ENCODE measurements at regions of chr6 and their contacts with region 1.

Region 1: GRCh38 chr6:73515204-73515655 is 5.6 kb downstream of the EEF1A1 start:
- DNase-seq: peak; percentile 41
- ATAC-seq: peak; percentile 17
- H3K4me3 Mint-ChIP-seq: peak overlapping the region; percentile 97
- H3K27ac Mint-ChIP-seq: peak overlapping the region; percentile 85
- H3K4me1 Mint-ChIP-seq: peaks cover 28% of the 10 kb centered on the region
- H3K27me3 Mint-ChIP-seq: no peaks in the 10 kb centered on the region
- CTCF ChIP-seq: no peak

Region 2: DNA sequence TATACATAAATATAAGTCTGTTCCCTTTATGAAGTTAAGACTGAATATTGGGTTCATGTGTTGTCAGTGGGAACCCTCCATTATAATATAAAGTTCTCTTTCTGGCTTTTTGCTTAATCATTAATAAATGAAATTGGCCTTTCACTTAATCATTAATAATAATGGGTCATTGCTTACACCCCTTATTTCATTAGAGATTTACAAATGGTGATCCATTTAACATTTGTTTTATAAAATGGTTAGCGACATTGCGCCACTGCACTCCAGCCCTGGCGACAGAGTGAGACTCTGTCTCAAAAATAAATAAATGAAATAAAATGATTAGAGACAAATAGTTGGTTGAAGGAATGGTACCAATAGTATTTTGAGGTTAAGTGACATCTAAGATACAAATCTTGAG is 102.1 kb before region 1 on chr6:
- CTCF ChIA-PET with region 1: no interaction called
- POLR2A ChIA-PET with region 1: no interaction called
- intact Hi-C with region 1: no loop called
- DNase-seq: no peak
- ATAC-seq: no peak
- H3K4me3 Mint-ChIP-seq: no peak overlapping the region
- H3K27ac Mint-ChIP-seq: no peak overlapping the region
- H3K4me1 Mint-ChIP-seq: peaks cover 3% of the 10 kb centered on the region
- H3K27me3 Mint-ChIP-seq: no peaks in the 10 kb centered on the region
- CTCF ChIP-seq: no peak

Region 3: GRCh38 chr6:73461537-73462350 is 53.5 kb before region 1 on chr6 and contains the start of gene MTO1:
- CTCF ChIA-PET with region 1: interaction called, 3 read pairs
- POLR2A ChIA-PET with region 1: interaction called, 73 read pairs
- intact Hi-C with region 1: no loop called
- DNase-seq: peak; percentile 94
- ATAC-seq: peak; percentile 93
- H3K4me3 Mint-ChIP-seq: peak within 1 kb of the TSS; percentile 91
- H3K27ac Mint-ChIP-seq: peak within 1 kb of the TSS; percentile 99
- H3K4me1 Mint-ChIP-seq: peaks cover 38% of the 10 kb centered on the region
- H3K27me3 Mint-ChIP-seq: no peaks in the 10 kb centered on the region
- CTCF ChIP-seq: no peak
- total RNA-seq, gene MTO1: 42.1 to 43.2 TPM

Region 4: GRCh38 chr6:73491377-73491776 is 23.9 kb before region 1 on chr6:
- CTCF ChIA-PET with region 1: no interaction called
- POLR2A ChIA-PET with region 1: interaction called, 194 read pairs
- intact Hi-C with region 1: no loop called
- DNase-seq: no peak
- ATAC-seq: no peak
- H3K4me3 Mint-ChIP-seq: no peak overlapping the region
- H3K27ac Mint-ChIP-seq: peak overlapping the region; percentile 22
- H3K4me1 Mint-ChIP-seq: peaks cover 2% of the 10 kb centered on the region
- H3K27me3 Mint-ChIP-seq: no peaks in the 10 kb centered on the region
- CTCF ChIP-seq: no peak

Region 5: DNA sequence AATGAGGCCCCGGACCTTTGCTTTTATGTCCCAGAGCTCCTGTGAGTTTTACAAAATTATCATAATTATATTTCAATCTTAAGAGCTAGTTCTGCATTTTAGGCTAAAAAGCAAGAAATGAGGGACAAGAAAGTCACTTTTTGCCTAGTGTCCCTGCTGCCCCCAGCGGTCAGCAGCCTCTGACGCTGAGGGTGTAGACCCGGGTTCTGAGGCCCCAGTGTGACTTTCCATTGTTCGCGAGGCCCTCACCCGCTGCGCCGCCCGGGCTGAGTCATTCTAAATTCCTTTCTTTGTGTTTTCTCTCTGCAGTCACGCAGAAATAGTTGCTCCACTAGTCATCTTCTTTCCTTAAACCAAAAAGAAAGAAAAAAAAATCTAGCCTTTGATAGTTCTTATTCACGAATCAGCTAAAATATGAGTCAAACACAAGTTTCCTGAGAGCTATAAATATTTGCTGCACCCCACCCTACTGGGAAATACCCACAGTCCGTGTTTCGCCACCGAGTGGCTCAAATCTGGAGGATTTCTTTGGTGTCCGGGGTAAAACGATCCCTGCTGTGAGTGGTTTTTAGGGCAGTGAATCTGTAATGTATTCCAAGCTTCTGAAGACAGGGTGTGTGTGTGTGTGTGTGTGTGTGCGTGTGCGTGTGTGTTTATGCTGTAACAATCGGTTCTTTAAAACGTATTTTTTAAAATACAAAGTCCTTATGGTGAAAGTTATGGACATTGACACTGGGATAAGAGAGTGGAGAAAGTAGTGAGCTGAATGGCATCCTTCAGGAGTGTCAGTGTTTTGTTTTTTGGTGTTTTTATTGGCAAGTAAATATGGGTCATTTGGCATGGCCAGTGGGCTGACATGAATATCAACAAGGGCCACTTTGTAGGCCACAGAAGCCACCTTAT is 65.3 kb after region 1 on chr6:
- CTCF ChIA-PET with region 1: interaction called, 3 read pairs
- POLR2A ChIA-PET with region 1: interaction called, 159 read pairs
- intact Hi-C with region 1: no loop called
- DNase-seq: peak; percentile 89
- ATAC-seq: peak; percentile 90
- H3K4me3 Mint-ChIP-seq: peak overlapping the region; percentile 69
- H3K27ac Mint-ChIP-seq: peak overlapping the region; percentile 99
- H3K4me1 Mint-ChIP-seq: peaks cover 28% of the 10 kb centered on the region
- H3K27me3 Mint-ChIP-seq: no peaks in the 10 kb centered on the region
- CTCF ChIP-seq: no peak

Region 6: DNA sequence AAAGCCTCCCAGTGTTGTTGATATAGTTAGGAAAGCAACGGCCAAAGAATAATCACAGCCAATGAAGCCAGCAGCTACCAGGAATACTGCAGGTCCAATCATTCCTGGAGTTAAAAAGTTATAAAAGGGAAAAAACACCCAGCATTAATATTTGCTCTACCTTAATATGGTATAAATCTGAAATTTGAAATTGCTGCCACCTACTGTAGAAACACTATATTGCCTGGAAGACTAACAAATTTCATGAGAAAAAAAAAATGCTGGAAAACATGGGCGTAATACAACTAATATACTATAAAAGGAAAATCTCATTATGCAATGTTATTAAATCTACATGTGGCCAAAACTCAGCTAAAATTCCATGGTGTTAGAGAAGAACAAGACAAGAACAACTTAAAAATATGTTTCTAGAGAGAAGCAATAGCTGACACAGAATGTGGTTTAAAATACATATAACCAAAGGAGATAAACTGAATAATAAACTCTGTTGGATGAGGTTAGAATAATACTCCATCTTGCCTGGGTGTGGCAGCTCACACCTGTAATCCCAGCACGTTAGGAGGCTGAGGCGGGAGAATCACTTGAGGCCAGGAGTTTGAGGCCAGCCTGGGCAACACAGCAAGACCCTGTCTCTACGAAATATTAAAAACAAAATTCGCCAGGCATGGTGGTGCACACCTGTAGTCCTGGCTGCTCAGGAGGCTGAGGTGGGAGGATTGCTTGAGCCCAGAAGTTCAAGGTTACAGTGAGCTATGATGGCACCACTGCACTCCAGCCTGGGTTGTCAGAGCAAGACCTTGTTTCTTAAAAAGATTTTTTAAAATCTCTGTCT is 95.4 kb after region 1 on chr6:
- CTCF ChIA-PET with region 1: interaction called, 41 read pairs
- POLR2A ChIA-PET with region 1: interaction called, 204 read pairs
- intact Hi-C with region 1: loop called (anchors 5 kb)
- DNase-seq: no peak
- ATAC-seq: peak; percentile 66
- H3K4me3 Mint-ChIP-seq: no peak overlapping the region
- H3K27ac Mint-ChIP-seq: no peak overlapping the region
- H3K4me1 Mint-ChIP-seq: peaks cover 4% of the 10 kb centered on the region
- H3K27me3 Mint-ChIP-seq: no peaks in the 10 kb centered on the region
- CTCF ChIP-seq: peak; percentile 73

Measured in activated CD8-positive, alpha-beta T cell treated with anti-CD3 and anti-CD28 coated beads for 36 hours (primary cell).